ENCODE measurements at regions of chr2 and their contacts with region 1.

Region 1: GRCh38 chr2:59866436-59866835 is 687.0 kb downstream of the BCL11A start:
- DNase-seq: no peak
- H3K4me3 ChIP-seq: no peak overlapping the region
- H3K27ac ChIP-seq: no peak overlapping the region
- H3K4me1 ChIP-seq: no peaks in the 10 kb centered on the region
- H3K27me3 ChIP-seq: no peaks in the 10 kb centered on the region
- CTCF ChIP-seq: no peak
- EP300 ChIP-seq: no peak
- POLR2A ChIP-seq: no peak

Region 2: DNA sequence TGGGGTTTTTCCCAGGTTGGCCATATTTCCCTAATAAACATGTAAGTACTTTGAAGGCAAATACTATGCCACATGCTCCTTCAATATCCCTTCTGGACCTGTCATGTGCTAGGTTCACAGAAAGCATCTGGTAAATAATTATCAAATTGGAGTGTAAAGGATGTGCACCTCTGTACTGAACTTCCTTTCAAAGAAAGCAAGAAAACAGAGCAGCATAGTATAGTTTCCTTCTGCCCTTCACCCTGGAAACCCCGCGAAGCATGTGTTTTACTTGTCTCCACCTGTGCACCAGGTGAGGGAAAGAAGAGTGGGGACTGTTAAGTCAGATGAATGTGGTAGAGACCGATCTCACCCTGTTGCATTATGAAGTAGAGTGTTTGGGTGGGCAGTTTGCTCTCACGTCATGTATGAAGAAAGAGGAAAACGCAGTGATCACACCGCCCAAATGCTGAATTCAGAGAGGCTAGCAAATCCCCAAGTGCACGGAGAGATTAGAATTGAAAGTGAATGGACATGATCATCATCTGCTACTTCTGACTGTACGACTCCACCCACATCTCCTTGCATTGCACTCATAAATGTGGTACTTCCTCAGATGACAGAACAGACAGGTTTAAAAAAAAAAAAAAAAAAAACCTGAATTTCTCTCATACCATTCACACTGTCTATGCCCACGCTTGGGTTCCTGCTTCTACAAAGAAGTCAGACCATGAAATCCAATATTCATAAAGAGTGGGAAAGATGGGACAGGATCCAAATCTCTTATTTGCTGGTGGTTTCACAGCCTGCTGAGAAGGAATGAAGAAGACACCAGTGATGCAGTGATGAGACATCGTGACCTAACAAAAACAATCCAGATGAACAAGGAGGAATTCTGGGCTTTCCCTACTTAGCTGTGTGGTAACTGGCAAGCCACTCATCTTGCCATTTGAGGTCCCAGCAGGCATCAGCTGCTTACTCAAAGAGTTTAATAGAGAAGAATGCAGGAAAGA is 238.4 kb after region 1 on chr2:
- in situ Hi-C with region 1: no loop called
- intact Hi-C with region 1: no loop called
- DNase-seq: no peak
- H3K4me3 ChIP-seq: no peak overlapping the region
- H3K27ac ChIP-seq: no peak overlapping the region
- H3K4me1 ChIP-seq: no peaks in the 10 kb centered on the region
- H3K27me3 ChIP-seq: no peaks in the 10 kb centered on the region
- CTCF ChIP-seq: no peak
- EP300 ChIP-seq: no peak
- POLR2A ChIP-seq: no peak

Region 3: DNA sequence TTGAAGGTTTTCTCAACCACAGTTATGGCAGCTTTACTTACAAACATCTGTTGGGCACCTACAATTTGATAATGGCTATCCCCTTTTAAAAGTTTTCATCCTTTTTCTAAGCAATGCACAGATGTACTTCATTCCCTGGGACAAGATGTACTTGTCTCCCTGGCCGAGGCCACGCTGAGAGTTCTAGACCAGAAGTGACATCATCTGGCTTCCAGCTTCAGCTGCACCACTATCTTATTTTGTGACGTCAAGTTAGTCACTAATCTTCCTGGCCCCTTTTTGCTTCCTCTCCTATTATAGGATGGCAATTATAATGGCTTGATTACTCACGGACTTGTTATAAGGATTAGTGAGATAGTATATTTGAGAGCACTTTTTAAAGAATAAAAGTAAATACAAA is 300.7 kb after region 1 on chr2:
- in situ Hi-C with region 1: no loop called
- intact Hi-C with region 1: no loop called
- DNase-seq: no peak
- H3K4me3 ChIP-seq: no peak overlapping the region
- H3K27ac ChIP-seq: no peak overlapping the region
- H3K4me1 ChIP-seq: no peaks in the 10 kb centered on the region
- H3K27me3 ChIP-seq: no peaks in the 10 kb centered on the region
- CTCF ChIP-seq: no peak
- EP300 ChIP-seq: no peak
- POLR2A ChIP-seq: no peak

Region 4: DNA sequence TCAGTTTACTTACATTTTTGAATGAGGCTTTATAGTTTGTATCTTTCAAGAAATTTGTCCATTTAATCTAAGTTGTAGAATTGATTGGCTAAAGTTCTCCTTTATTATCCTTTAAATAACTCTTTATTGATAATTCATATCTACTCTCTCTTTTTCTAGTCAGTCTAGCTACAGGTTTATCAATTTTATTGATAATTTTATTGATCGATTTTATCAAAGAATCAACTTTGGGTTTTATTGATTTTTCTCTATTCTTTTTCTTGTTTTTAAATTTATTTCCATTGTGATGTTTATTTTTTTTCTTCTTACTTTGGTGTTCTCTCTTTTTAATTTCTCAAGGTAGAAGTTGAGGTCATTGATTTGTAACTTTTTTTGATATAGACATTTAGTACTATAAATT is 373.9 kb after region 1 on chr2:
- in situ Hi-C with region 1: no loop called
- intact Hi-C with region 1: loop called (anchors 5 kb)
- DNase-seq: no peak
- H3K4me3 ChIP-seq: no peak overlapping the region
- H3K27ac ChIP-seq: no peak overlapping the region
- H3K4me1 ChIP-seq: no peaks in the 10 kb centered on the region
- H3K27me3 ChIP-seq: no peaks in the 10 kb centered on the region
- CTCF ChIP-seq: no peak
- EP300 ChIP-seq: no peak
- POLR2A ChIP-seq: no peak

Region 5: DNA sequence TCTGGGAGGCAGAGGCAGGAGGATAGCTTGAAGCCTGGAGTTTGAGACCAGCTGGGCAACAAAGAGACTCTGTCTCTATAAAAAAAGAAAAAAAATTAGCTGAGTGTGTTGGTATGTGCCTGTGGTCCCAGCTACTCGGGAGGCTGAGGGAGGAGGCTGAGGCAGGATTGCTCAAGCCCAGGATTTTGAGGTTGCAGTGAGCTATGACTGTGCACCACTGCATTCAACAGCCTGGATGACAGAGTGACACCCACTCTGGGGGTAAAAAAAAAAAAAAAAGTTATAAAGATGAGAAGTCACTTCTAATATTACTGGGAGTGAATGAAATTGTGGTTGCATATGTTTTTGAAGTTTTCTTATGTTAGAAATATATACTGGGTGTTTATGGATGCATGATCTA is 1367.1 kb after region 1 on chr2:
- in situ Hi-C with region 1: no loop called
- intact Hi-C with region 1: no loop called
- DNase-seq: no peak
- H3K4me3 ChIP-seq: no peak overlapping the region
- H3K27ac ChIP-seq: no peak overlapping the region
- H3K4me1 ChIP-seq: no peaks in the 10 kb centered on the region
- H3K27me3 ChIP-seq: no peaks in the 10 kb centered on the region
- CTCF ChIP-seq: no peak
- EP300 ChIP-seq: no peak
- POLR2A ChIP-seq: no peak